ENCODE measurements at regions of chr7 and their contacts with region 1.

Region 1: GRCh38 chr7:118858651-118859149 is 634.2 kb downstream of the ANKRD7 start:
- DNase-seq: no peak
- ATAC-seq: no peak
- H3K4me3 ChIP-seq: no peak overlapping the region
- H3K4me3 Mint-ChIP-seq: no peak overlapping the region
- H3K27ac ChIP-seq: no peak overlapping the region
- H3K27ac Mint-ChIP-seq: no peak overlapping the region
- H3K4me1 ChIP-seq: no peaks in the 10 kb centered on the region
- H3K4me1 Mint-ChIP-seq: no peaks in the 10 kb centered on the region
- H3K27me3 ChIP-seq: no peaks in the 10 kb centered on the region
- H3K27me3 Mint-ChIP-seq: no peaks in the 10 kb centered on the region
- CTCF ChIP-seq: no peak

Region 2: GRCh38 chr7:118902600-118902999 is 43.9 kb after region 1 on chr7:
- CTCF ChIA-PET with region 1: no interaction called
- POLR2A ChIA-PET with region 1: no interaction called
- intact Hi-C with region 1: loop called (anchors 1 kb)
- DNase-seq: no peak
- ATAC-seq: no peak
- H3K4me3 ChIP-seq: no peak overlapping the region
- H3K4me3 Mint-ChIP-seq: no peak overlapping the region
- H3K27ac ChIP-seq: no peak overlapping the region
- H3K27ac Mint-ChIP-seq: no peak overlapping the region
- H3K4me1 ChIP-seq: no peaks in the 10 kb centered on the region
- H3K4me1 Mint-ChIP-seq: no peaks in the 10 kb centered on the region
- H3K27me3 ChIP-seq: no peaks in the 10 kb centered on the region
- H3K27me3 Mint-ChIP-seq: no peaks in the 10 kb centered on the region
- CTCF ChIP-seq: no peak